ENCODE measurements at regions of chr6 and their contacts with region 1.

Region 1: DNA sequence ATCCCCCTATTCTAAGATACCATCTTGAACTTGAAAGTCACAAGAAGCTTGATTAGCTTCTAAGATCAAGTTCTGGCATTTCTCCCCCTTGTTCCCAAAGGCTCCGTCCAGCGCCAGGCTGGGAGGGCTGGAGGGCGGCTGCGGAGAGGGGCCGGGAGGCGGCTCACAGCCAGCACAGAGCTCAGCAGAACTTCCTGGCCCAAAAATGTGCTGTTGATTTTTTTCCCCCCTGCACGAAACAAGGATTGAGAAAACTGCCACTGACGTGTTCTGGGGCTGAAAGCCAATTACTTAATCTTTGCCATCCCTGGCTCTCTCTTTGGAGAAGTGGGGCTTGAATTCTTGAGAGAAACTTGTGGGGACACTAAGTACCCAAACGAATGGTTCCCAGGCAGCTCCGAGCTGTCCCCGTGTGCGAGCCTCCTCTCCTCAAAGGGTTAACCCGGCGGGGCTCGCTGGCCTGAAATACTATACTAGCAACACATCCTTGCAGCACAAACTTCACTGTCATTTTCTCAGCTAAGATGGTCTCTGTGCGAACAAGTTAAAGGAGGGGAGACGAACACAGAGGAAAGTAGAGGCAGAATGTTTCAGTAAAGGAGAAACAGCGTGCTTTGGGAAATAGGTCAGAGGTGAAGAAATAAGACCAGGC is 452 bp downstream of the TRAF3IP2 start:
- DNase-seq: peak; percentile 64
- H3K4me3 ChIP-seq: peak overlapping the region; percentile 28 to 68 (median 48)
- H3K27ac ChIP-seq: peak overlapping the region; percentile 87 to 98 (median 95)
- H3K4me1 ChIP-seq: peaks cover 28 to 65% (median 62%) of the 10 kb centered on the region in 4 donors
- H3K27me3 ChIP-seq: no peaks in the 10 kb centered on the region
- CTCF ChIP-seq: no peak
- EP300 ChIP-seq: peak; percentile 54
- POLR2A ChIP-seq: no peak

Region 2: DNA sequence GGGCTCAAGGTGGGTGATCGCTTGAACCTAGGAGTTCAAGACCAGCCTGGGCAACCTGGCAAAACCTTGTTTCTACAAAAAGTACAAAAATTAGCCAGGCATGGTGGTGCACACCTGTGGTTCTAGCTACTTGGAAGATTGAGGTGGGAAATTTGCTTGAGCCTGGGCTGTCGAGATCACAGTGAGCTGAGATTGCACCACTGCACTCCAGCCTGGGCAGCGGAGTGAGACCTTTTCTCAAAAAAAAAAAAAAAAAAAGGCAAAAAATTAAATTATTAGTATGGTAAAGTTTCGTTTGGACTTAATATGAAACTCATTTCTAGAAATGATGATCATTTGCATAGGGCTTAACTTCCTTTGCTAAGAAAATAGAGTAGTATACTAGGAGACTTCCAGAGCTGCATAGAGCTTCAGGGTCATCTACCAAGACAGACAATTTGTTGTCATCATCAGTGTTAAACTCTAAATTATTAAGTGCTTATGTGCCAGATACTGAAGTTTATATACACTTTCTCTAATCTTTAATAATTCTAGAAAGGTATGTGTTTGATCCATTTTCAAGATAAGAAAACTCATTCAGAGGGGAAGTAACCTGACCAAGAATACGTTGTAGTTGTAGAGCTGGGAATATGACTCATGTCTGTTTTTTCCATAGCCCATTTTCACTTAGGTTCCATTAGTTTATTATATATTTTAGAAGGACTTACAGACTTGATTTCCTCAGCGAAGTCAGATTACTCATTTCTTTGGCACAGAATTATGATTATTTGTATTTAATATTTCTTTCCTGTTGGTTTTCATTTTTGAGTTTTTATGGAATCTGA is 433.4 kb before region 1 on chr6:
- in situ Hi-C with region 1: no loop called
- intact Hi-C with region 1: no loop called
- DNase-seq: no peak
- H3K4me3 ChIP-seq: no peak overlapping the region
- H3K27ac ChIP-seq: no peak overlapping the region
- H3K4me1 ChIP-seq: no peaks in the 10 kb centered on the region
- H3K27me3 ChIP-seq: no peaks in the 10 kb centered on the region
- CTCF ChIP-seq: no peak
- EP300 ChIP-seq: no peak
- POLR2A ChIP-seq: no peak

Region 3: GRCh38 chr6:111259089-111259831 is 346.0 kb before region 1 on chr6:
- in situ Hi-C with region 1: loop called in 1 of 4 experiments (anchors 25 kb)
- intact Hi-C with region 1: no loop called
- DNase-seq: peak; percentile 99
- H3K4me3 ChIP-seq: peak overlapping the region; percentile 57 to 87 (median 68)
- H3K27ac ChIP-seq: peak overlapping the region; percentile 95 to 96 (median 96)
- H3K4me1 ChIP-seq: peaks cover 9 to 26% (median 13%) of the 10 kb centered on the region in 4 donors
- H3K27me3 ChIP-seq: no peaks in the 10 kb centered on the region
- CTCF ChIP-seq: peak; percentile 90 to 99 (median 94)
- EP300 ChIP-seq: no peak
- POLR2A ChIP-seq: peak; percentile 72